IMR-90 (cell line): ENCODE measurements at regions of chrX and their contacts with region 1.

Region 1: DNA sequence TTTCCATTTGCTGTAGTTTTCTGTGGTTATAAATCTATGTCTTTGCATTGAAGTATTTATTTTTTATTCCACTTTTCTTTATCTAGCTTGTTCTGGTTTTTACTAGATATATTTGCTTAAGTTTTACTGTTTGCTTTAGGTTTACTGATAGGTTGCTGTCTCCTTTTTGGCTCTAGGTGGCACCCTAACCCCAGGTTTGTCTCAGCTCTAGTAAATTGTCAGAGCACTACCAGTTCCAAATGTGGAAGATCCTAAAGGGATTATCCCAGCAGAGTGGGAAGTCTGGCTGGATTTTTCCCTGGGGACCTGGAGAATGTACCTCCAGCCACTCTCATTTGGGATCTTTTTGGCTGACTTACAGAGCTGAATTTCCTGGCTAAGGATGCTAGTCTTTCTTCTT is 106.1 kb downstream of the PBDC1 start:
- DNase-seq: peak; percentile 47
- ATAC-seq: peak; percentile 82
- H3K4me3 ChIP-seq: no peak overlapping the region
- H3K27ac ChIP-seq: no peak overlapping the region
- H3K4me1 ChIP-seq: no peaks in the 10 kb centered on the region
- H3K27me3 ChIP-seq: no peaks in the 10 kb centered on the region
- CTCF ChIP-seq: peak; percentile 69
- POLR2A ChIP-seq: no peak
- RAD21 ChIP-seq: peak; percentile 74

Region 2: GRCh38 chrX:76454456-76454927 is 175.5 kb after region 1 on chrX:
- CTCF ChIA-PET with region 1: interaction called, 6 read pairs
- POLR2A ChIA-PET with region 1: no interaction called
- dilution Hi-C with region 1: no loop called
- in situ Hi-C with region 1: loop called (anchors 25 kb)
- intact Hi-C with region 1: loop called (anchors 1 kb)
- DNase-seq: peak; percentile 9
- ATAC-seq: peak; percentile 86
- H3K4me3 ChIP-seq: no peak overlapping the region
- H3K27ac ChIP-seq: no peak overlapping the region
- H3K4me1 ChIP-seq: no peaks in the 10 kb centered on the region
- H3K27me3 ChIP-seq: no peaks in the 10 kb centered on the region
- CTCF ChIP-seq: peak; percentile 49
- POLR2A ChIP-seq: no peak
- RAD21 ChIP-seq: peak; percentile 45